Panc1 (cell line): ENCODE measurements at regions of chr10 and their contacts with region 1.

Region 1: DNA sequence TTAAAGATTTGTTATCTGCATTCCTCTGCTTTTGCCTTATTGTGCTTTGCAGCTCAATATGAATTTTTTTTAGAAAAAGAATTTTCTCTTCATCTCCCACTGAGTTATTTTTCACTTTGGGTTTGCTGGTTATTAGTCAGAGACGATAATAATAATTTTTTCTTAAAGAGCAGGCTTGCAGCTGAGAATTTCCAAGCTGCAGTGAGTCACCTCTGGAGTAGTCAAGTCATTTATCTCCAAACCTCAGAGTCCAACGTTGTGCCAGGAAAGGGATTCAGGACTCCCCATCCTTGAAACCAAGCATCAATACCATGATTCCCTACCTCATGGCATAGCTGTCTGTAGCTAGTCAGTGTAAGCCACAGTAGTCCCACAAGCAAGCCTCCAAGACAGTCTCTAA is 15.2 kb upstream of the EGR2 start:
- DNase-seq: no peak
- ATAC-seq: no peak
- H3K4me3 ChIP-seq: no peak overlapping the region
- H3K27ac ChIP-seq: no peak overlapping the region
- H3K4me1 ChIP-seq: no peaks in the 10 kb centered on the region
- H3K27me3 ChIP-seq: peaks cover 8% of the 10 kb centered on the region; the same call in 1 of the 2 replicates
- CTCF ChIP-seq: no peak

Region 2: DNA sequence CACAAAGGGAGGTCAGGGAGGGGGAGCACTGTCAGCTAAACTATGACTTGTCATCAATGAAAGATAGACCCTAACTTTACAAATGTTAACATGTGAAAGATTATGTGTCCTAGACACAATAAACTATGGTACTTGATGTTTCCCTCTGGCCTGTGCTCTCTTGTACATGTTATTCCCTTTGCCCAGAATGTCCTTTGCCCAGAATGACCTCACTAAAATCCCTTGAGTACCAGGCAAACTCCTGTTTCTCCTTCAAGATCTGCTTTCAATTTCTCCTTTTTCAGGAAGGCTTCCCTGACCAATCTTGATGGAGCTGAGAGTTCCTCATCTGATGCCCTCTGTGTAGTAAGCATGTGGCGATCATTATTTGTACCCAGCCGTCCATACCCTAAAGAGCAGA is 314.1 kb before region 1 on chr10:
- CTCF ChIA-PET with region 1: no interaction called
- POLR2A ChIA-PET with region 1: no interaction called
- in situ Hi-C with region 1: no loop called
- intact Hi-C with region 1: no loop called
- DNase-seq: no peak
- ATAC-seq: no peak
- H3K4me3 ChIP-seq: no peak overlapping the region
- H3K27ac ChIP-seq: no peak overlapping the region
- H3K4me1 ChIP-seq: no peaks in the 10 kb centered on the region
- H3K27me3 ChIP-seq: no peaks in the 10 kb centered on the region; the same call in 1 of the 2 replicates
- CTCF ChIP-seq: no peak

Region 3: GRCh38 chr10:62599161-62599560 is 232.2 kb before region 1 on chr10:
- CTCF ChIA-PET with region 1: no interaction called
- POLR2A ChIA-PET with region 1: no interaction called
- in situ Hi-C with region 1: no loop called
- intact Hi-C with region 1: no loop called
- DNase-seq: no peak
- ATAC-seq: no peak
- H3K4me3 ChIP-seq: no peak overlapping the region
- H3K27ac ChIP-seq: no peak overlapping the region
- H3K4me1 ChIP-seq: no peaks in the 10 kb centered on the region
- H3K27me3 ChIP-seq: no peaks in the 10 kb centered on the region
- CTCF ChIP-seq: no peak

Region 4: DNA sequence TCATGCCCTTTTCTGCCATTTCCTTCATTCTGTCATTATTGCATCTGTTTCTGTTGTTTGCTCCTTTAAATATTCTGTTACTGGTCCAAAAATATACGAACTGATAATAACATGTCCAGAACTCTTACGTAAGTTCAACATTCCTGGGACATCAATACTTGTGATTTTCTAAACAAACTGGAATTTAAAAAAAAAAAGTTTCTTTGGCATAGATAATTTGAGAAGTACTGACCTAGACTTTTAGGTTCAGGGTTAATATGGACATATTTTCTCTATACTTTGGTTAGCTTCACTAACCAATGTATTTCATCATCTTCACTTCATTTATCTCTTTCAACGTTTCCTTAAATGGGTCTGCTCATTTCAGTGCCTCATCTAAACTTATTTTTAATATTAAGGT is 487.1 kb after region 1 on chr10:
- CTCF ChIA-PET with region 1: no interaction called
- POLR2A ChIA-PET with region 1: interaction called, 15 read pairs
- in situ Hi-C with region 1: no loop called
- intact Hi-C with region 1: no loop called
- DNase-seq: no peak
- ATAC-seq: no peak
- H3K4me3 ChIP-seq: no peak overlapping the region
- H3K27ac ChIP-seq: no peak overlapping the region
- H3K4me1 ChIP-seq: no peaks in the 10 kb centered on the region
- H3K27me3 ChIP-seq: no peaks in the 10 kb centered on the region
- CTCF ChIP-seq: no peak

Region 5: DNA sequence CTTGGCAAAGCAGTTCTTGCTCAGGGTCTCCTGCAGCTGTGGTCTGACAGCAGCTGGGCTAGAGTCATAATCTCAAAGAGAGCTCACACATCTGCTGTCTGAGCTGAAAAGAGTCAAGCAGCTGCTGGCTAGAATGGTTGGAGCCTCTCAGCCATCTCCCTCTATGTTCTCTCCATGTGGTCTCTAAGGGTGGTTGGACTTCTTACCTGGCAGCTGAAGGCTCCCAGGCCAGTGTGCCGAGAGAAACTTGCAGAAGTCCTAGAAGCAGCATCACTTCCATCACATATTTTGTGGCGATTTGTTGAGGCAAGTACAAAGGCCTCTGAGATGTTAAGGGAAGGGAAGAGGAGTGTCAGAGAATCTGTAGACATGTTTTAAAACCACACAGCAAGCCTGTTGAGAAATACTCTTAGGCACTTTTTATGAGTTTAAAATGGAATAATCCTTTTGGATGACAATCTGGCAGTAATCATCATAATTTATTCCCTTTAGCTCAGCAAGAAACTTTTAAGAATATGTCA is 783.1 kb after region 1 on chr10:
- CTCF ChIA-PET with region 1: no interaction called
- POLR2A ChIA-PET with region 1: no interaction called
- in situ Hi-C with region 1: no loop called
- intact Hi-C with region 1: no loop called
- DNase-seq: no peak
- ATAC-seq: peak; percentile 48; the same call in 1 of the 2 replicates
- H3K4me3 ChIP-seq: no peak overlapping the region
- H3K27ac ChIP-seq: no peak overlapping the region
- H3K4me1 ChIP-seq: no peaks in the 10 kb centered on the region
- H3K27me3 ChIP-seq: no peaks in the 10 kb centered on the region
- CTCF ChIP-seq: no peak